PC-9 (cell line): ENCODE measurements at regions of chr10 and their contacts with region 1.

Region 1: GRCh38 chr10:17229969-17230682 is 2.1 kb downstream of the VIM start:
- DNase-seq: peak; percentile 80 to 87
- H3K4me3 ChIP-seq: peak overlapping the region; percentile 75
- H3K27ac ChIP-seq: peak overlapping the region; percentile 87
- H3K4me1 ChIP-seq: peaks cover 9% of the 10 kb centered on the region
- H3K27me3 ChIP-seq: peaks cover 13% of the 10 kb centered on the region; the same call in 1 of the 2 replicates
- CTCF ChIP-seq: no peak

Region 2: DNA sequence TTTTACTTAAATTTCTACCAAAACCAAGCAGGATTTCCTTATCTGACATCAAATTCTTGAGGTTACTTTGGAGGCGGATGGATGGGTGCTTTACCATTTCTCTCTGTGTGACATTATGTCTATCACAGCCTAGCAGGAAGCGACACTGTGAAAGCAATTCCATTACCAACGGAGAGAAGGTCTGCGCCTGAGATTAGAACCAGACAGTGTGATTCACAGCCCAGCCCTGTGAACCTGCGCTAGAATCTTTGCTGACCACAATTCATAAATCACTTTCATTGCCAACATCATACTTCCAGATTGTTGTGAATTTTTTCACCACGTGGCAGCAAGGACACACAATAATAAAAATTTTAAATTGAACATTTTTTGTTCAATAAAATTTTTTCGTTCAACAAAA is 227.0 kb before region 1 on chr10:
- CTCF ChIA-PET with region 1: no interaction called
- POLR2A ChIA-PET with region 1: no interaction called
- intact Hi-C with region 1: loop called (anchors 1 kb)
- DNase-seq: peak in 1 of 2 experiments; percentile 58
- H3K4me3 ChIP-seq: no peak overlapping the region
- H3K27ac ChIP-seq: no peak overlapping the region
- H3K4me1 ChIP-seq: no peaks in the 10 kb centered on the region
- H3K27me3 ChIP-seq: no peaks in the 10 kb centered on the region
- CTCF ChIP-seq: no peak

Region 3: DNA sequence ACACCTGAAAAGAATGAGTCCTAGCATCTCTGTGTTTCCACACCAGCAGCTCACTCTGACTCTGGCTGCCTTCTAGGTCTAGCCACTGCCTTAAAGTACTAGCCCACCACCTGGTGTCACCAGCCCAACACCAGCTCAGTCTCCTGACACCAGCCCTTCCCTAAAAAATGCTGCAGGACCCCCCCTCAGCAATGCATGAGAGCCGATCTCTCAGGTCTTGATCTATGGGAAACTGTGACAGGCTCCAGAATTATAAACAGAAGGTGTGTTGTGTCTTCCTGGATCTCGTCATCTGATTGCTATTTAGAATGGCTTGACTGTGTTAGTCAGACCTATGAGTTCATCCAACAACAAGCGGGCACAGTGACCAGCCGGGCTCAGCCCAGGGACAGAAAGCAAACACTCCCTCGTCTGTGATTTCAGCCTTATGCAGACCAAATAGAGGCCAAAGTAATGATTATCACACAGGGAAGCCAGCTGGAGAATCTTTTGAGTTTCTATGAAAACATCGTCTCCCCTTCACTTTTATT is 167.1 kb before region 1 on chr10:
- CTCF ChIA-PET with region 1: no interaction called
- POLR2A ChIA-PET with region 1: no interaction called
- intact Hi-C with region 1: loop called (anchors 2 kb)
- DNase-seq: peak; percentile 73 to 88
- H3K4me3 ChIP-seq: peak overlapping the region; percentile 39; the same call in 1 of the 2 replicates
- H3K27ac ChIP-seq: peak overlapping the region; percentile 96
- H3K4me1 ChIP-seq: peaks cover 47% of the 10 kb centered on the region
- H3K27me3 ChIP-seq: no peaks in the 10 kb centered on the region
- CTCF ChIP-seq: no peak

Region 4: GRCh38 chr10:17200912-17201793 is 29.0 kb before region 1 on chr10 and contains the start of gene TRDMT1:
- CTCF ChIA-PET with region 1: no interaction called
- POLR2A ChIA-PET with region 1: interaction called, 4 read pairs
- intact Hi-C with region 1: loop called (anchors 1 kb)
- DNase-seq: peak; percentile 56 to 84
- H3K4me3 ChIP-seq: peak within 1 kb of the TSS; percentile 97
- H3K27ac ChIP-seq: peak within 1 kb of the TSS; percentile 68
- H3K4me1 ChIP-seq: peaks cover 16% of the 10 kb centered on the region
- H3K27me3 ChIP-seq: no peaks in the 10 kb centered on the region
- CTCF ChIP-seq: no peak
- total RNA-seq, gene TRDMT1: 3.2 and 4.2 TPM in 2 replicates

Region 5: DNA sequence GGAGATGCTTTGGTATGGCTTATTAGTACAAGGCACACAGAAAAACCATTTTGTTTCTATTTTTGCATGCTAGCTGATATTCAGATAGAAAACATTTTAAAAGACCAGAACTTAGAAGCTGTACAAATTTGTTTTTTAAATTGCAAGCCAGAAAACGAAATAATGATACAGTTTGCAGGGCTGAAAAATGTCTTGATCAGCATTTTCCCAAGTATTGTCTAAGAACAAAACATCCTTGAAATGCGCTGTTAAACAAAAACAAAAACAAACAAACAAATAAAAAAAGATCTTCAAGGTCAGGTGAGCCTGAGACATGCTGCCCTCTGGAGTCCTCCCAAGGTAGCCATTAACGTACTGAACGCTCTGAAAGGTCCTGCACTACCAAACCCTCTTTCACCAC is 96.3 kb after region 1 on chr10:
- CTCF ChIA-PET with region 1: no interaction called
- POLR2A ChIA-PET with region 1: interaction called, 16 read pairs
- intact Hi-C with region 1: no loop called
- DNase-seq: no peak
- H3K4me3 ChIP-seq: no peak overlapping the region
- H3K27ac ChIP-seq: no peak overlapping the region
- H3K4me1 ChIP-seq: no peaks in the 10 kb centered on the region
- H3K27me3 ChIP-seq: no peaks in the 10 kb centered on the region
- CTCF ChIP-seq: no peak

Region 6: DNA sequence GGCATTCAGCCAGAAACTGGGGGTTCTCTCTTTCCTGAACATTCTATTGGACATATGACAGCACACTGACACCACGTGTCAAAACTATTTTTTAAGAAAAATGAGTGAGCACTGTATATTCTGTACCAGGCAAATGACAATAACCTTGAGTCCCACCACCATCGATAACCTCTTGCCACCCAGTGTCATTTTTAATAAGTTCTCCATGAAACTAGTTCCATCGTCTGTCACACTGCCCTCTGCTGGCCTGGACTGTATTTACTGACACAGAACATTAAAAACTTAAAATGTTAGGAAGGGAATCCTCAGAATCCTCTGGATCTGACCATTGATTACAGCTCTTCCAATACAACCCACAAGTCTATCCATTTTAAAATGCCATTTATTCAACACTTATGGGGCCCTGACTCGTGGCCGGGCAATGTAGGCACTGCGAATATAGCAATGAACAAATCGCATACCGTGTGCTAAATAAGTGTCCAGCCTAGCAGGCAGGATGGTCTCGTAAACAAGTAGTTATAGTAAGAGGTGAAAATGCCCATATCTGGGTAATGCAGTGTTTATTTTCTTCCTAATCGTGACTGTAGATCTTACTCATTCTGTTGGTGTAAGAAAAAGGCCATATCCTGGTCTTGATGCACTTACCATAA is 874.2 kb after region 1 on chr10:
- CTCF ChIA-PET with region 1: no interaction called
- POLR2A ChIA-PET with region 1: no interaction called
- intact Hi-C with region 1: no loop called
- DNase-seq: peak; percentile 28 to 33
- H3K4me3 ChIP-seq: no peak overlapping the region
- H3K27ac ChIP-seq: no peak overlapping the region
- H3K4me1 ChIP-seq: no peaks in the 10 kb centered on the region
- H3K27me3 ChIP-seq: no peaks in the 10 kb centered on the region
- CTCF ChIP-seq: peak; percentile 71